ENCODE measurements at regions of chr12 and their contacts with region 1.

Region 1: DNA sequence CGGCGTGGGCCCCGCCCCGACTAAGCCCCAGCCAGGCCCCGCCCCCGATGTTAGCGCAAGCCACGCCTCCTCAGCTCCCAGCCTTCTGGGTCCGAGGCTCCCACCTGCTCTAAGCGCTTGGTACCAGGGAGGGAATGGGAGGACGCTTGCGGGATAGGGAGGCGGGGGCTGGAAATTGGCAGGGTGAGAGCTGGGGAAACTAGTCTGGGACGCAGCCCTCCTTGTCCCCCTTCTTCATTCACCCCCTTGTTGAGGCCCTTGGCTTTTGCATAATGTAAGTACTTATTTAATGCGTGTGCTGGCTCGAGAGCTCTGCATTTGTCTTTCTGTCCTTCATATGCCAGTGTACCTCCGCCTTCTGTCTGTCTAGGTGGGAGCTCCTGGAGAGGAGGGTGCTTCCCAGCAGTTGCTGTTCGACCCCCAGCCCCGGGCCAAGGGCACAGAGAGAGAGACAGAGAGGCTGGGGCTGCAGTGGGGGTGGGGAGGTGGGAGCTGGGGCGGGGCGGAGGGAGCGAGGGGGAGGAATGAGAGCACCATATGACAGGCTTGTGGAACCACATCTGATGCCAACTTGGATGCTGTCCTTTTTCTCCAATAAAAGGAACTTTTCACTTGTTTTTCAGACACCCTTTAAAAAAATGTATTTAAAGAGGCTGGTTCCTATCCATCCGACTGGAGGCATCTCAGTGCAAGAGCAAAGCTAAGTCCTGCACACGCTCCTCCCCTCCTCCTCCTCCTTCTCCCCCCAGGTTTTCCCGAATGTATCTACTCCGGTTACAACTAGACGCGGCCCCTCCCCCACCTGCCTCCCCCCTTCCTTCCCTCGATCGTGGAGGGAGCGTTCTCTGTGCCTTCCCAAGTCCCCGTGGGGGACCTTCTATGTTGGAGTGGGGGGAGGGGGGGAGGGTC is 25.6 kb upstream of the MAP1LC3B2 start:
- DNase-seq: peak; percentile 82
- H3K4me3 Mint-ChIP-seq: peak overlapping the region; percentile 80
- H3K27ac Mint-ChIP-seq: no peak overlapping the region
- H3K4me1 Mint-ChIP-seq: peaks cover 22% of the 10 kb centered on the region
- H3K27me3 Mint-ChIP-seq: no peaks in the 10 kb centered on the region

Region 2: GRCh38 chr12:116358893-116359761 is 174.5 kb before region 1 on chr12:
- CTCF ChIA-PET with region 1: no interaction called
- intact Hi-C with region 1: no loop called
- DNase-seq: peak; percentile 67
- H3K4me3 Mint-ChIP-seq: peak overlapping the region; percentile 65
- H3K27ac Mint-ChIP-seq: peak overlapping the region; percentile 77
- H3K4me1 Mint-ChIP-seq: peaks cover 25% of the 10 kb centered on the region
- H3K27me3 Mint-ChIP-seq: no peaks in the 10 kb centered on the region

Region 3: GRCh38 chr12:116474331-116474730 is 59.3 kb before region 1 on chr12:
- CTCF ChIA-PET with region 1: no interaction called
- intact Hi-C with region 1: no loop called
- DNase-seq: no peak
- H3K4me3 Mint-ChIP-seq: no peak overlapping the region
- H3K27ac Mint-ChIP-seq: no peak overlapping the region
- H3K4me1 Mint-ChIP-seq: no peaks in the 10 kb centered on the region
- H3K27me3 Mint-ChIP-seq: no peaks in the 10 kb centered on the region

Region 4: GRCh38 chr12:116594325-116595038 is 60.9 kb after region 1 on chr12:
- CTCF ChIA-PET with region 1: interaction called, 4 read pairs
- intact Hi-C with region 1: loop called (anchors 1 kb)
- DNase-seq: peak; percentile 76
- H3K4me3 Mint-ChIP-seq: no peak overlapping the region
- H3K27ac Mint-ChIP-seq: no peak overlapping the region
- H3K4me1 Mint-ChIP-seq: peaks cover 22% of the 10 kb centered on the region
- H3K27me3 Mint-ChIP-seq: no peaks in the 10 kb centered on the region

Region 5: GRCh38 chr12:116677202-116677661 is 143.6 kb after region 1 on chr12:
- CTCF ChIA-PET with region 1: no interaction called
- intact Hi-C with region 1: no loop called
- DNase-seq: no peak
- H3K4me3 Mint-ChIP-seq: no peak overlapping the region
- H3K27ac Mint-ChIP-seq: no peak overlapping the region
- H3K4me1 Mint-ChIP-seq: peaks cover 32% of the 10 kb centered on the region
- H3K27me3 Mint-ChIP-seq: no peaks in the 10 kb centered on the region

Region 6: GRCh38 chr12:116954710-116955381 is 421.2 kb after region 1 on chr12:
- CTCF ChIA-PET with region 1: no interaction called
- intact Hi-C with region 1: no loop called
- DNase-seq: no peak
- H3K4me3 Mint-ChIP-seq: no peak overlapping the region
- H3K27ac Mint-ChIP-seq: no peak overlapping the region
- H3K4me1 Mint-ChIP-seq: peaks cover 7% of the 10 kb centered on the region
- H3K27me3 Mint-ChIP-seq: no peaks in the 10 kb centered on the region